B cell (primary cell): ENCODE measurements at regions of chr12 and their contacts with region 1.

Region 1: DNA sequence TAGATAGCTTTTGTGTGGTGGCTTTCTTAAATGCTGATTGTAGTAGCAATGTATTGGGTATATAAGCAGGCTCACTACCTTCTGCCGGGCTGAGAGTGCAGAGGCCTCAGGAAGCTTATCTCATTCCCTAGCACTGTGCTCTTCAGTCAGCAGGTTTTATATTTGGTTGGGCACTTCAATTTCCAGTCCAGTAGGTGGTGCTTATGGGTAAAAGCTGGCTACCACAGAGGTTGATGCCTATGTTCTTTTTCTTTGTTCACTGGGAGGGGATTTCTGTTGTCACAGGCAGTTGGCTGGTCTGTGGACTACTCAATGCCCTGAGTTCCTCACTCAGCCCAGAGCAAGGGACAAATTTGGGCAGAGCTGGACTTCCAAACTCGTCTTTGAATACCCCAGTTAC is 43.0 kb upstream of the GLIPR1 start:
- DNase-seq: peak; percentile 65
- ATAC-seq: peak; percentile 86
- H3K4me3 ChIP-seq: no peak overlapping the region
- H3K4me3 Mint-ChIP-seq: no peak overlapping the region
- H3K27ac ChIP-seq: no peak overlapping the region
- H3K27ac Mint-ChIP-seq: no peak overlapping the region
- H3K4me1 ChIP-seq: peaks cover 0 to 6% of the 10 kb centered on the region in 2 donors
- H3K4me1 Mint-ChIP-seq: peaks cover 9% of the 10 kb centered on the region
- H3K27me3 ChIP-seq: no peaks in the 10 kb centered on the region
- H3K27me3 Mint-ChIP-seq: peaks cover 7% of the 10 kb centered on the region
- CTCF ChIP-seq: peak; percentile 60

Region 2: GRCh38 chr12:75041472-75041871 is 396.1 kb before region 1 on chr12:
- CTCF ChIA-PET with region 1: no interaction called
- POLR2A ChIA-PET with region 1: no interaction called
- intact Hi-C with region 1: no loop called
- DNase-seq: no peak
- ATAC-seq: no peak
- H3K4me3 ChIP-seq: no peak overlapping the region
- H3K4me3 Mint-ChIP-seq: no peak overlapping the region
- H3K27ac ChIP-seq: no peak overlapping the region
- H3K27ac Mint-ChIP-seq: no peak overlapping the region
- H3K4me1 ChIP-seq: no peaks in the 10 kb centered on the region
- H3K4me1 Mint-ChIP-seq: no peaks in the 10 kb centered on the region
- H3K27me3 ChIP-seq: no peaks in the 10 kb centered on the region
- H3K27me3 Mint-ChIP-seq: no peaks in the 10 kb centered on the region
- CTCF ChIP-seq: no peak

Region 3: DNA sequence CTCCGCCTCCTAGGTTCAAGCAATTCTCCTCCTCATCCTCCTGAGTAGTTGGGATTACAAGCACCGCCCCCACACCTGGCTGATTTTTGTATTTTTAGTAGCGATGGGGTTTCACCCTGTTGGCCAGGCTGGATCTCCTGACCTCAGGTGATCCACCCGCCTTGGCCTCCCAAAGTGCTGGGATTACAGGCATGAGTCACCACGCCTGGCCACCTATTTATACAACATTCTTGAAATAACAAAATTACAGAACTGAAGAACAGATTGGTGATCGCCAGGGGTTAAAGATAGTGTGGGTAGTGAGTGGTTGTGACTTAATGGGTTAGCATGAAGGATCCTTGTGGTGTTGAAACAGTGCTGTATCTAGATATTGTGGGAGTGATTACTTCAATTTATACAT is 95.7 kb before region 1 on chr12:
- CTCF ChIA-PET with region 1: no interaction called
- POLR2A ChIA-PET with region 1: no interaction called
- intact Hi-C with region 1: no loop called
- DNase-seq: no peak
- ATAC-seq: no peak
- H3K4me3 ChIP-seq: no peak overlapping the region
- H3K4me3 Mint-ChIP-seq: no peak overlapping the region
- H3K27ac ChIP-seq: no peak overlapping the region
- H3K27ac Mint-ChIP-seq: no peak overlapping the region
- H3K4me1 ChIP-seq: no peaks in the 10 kb centered on the region
- H3K4me1 Mint-ChIP-seq: no peaks in the 10 kb centered on the region
- H3K27me3 ChIP-seq: no peaks in the 10 kb centered on the region
- H3K27me3 Mint-ChIP-seq: peaks cover 3% of the 10 kb centered on the region
- CTCF ChIP-seq: no peak

Region 4: GRCh38 chr12:75354011-75354410 is 83.6 kb before region 1 on chr12:
- CTCF ChIA-PET with region 1: no interaction called
- POLR2A ChIA-PET with region 1: no interaction called
- intact Hi-C with region 1: no loop called
- DNase-seq: no peak
- ATAC-seq: no peak
- H3K4me3 ChIP-seq: no peak overlapping the region
- H3K4me3 Mint-ChIP-seq: no peak overlapping the region
- H3K27ac ChIP-seq: no peak overlapping the region
- H3K27ac Mint-ChIP-seq: no peak overlapping the region
- H3K4me1 ChIP-seq: no peaks in the 10 kb centered on the region
- H3K4me1 Mint-ChIP-seq: no peaks in the 10 kb centered on the region
- H3K27me3 ChIP-seq: no peaks in the 10 kb centered on the region
- H3K27me3 Mint-ChIP-seq: peaks cover 9% of the 10 kb centered on the region
- CTCF ChIP-seq: no peak

Region 5: DNA sequence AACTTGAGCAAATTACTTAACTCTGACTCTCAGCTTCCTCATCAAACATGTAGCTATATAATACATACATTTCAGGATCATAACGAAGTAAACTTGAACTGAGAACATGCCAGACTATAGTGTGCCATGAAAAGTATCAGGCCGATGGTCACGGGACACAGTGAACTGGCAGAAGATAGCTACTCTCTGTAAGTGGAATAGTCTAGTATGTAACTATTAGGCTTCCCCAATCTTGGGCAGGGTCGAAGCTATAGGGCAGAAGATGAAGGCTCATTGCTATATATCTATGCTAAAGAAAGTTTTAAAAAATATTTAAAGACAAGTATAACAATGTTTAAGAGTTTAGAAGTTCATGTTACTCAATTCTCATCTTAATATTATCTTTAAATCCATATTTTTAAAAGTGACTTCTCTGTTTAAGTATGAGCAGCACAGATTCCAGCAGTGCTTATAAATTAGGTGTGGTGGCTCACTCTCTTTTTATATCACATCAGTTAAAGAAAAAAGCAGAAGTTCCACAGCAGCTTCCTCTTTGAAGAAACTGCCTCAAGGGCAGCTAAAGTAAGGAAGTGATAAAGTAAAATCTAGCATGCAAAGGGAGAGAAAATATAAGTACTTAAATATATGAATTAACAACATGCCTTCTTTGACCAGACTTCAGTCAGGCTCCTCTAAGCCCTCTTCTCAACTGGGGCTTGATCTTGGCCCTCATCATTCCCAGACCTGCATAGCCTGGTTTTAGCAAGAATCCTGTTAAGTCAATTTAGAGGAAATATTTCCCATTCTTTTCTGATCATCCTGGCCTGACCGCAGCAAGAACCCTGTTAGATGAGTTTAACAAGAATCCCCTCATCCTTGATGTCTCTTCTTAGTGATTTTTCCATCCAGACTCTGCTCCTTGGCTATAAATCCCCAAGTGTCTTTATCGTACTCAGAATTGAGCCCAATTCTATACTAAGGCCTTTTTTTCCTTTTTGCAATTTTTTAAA is 34.6 kb after region 1 on chr12:
- CTCF ChIA-PET with region 1: interaction called, 13 read pairs
- POLR2A ChIA-PET with region 1: interaction called, 3 read pairs
- intact Hi-C with region 1: no loop called
- DNase-seq: peak; percentile 78
- ATAC-seq: peak; percentile 87
- H3K4me3 ChIP-seq: peak overlapping the region in 3 of 5 experiments; percentile 5 to 49 (median 16)
- H3K4me3 Mint-ChIP-seq: peak overlapping the region; percentile 72
- H3K27ac ChIP-seq: peak overlapping the region; percentile 68 to 76
- H3K27ac Mint-ChIP-seq: peak overlapping the region; percentile 94
- H3K4me1 ChIP-seq: peaks cover 20 to 22% of the 10 kb centered on the region in 2 donors
- H3K4me1 Mint-ChIP-seq: peaks cover 41% of the 10 kb centered on the region
- H3K27me3 ChIP-seq: no peaks in the 10 kb centered on the region
- H3K27me3 Mint-ChIP-seq: no peaks in the 10 kb centered on the region
- CTCF ChIP-seq: no peak

Region 6: GRCh38 chr12:75489613-75490210 is 52.1 kb after region 1 on chr12:
- CTCF ChIA-PET with region 1: interaction called, 104 read pairs
- POLR2A ChIA-PET with region 1: no interaction called
- intact Hi-C with region 1: loop called (anchors 2 kb)
- DNase-seq: no peak
- ATAC-seq: peak; percentile 21
- H3K4me3 ChIP-seq: no peak overlapping the region
- H3K4me3 Mint-ChIP-seq: no peak overlapping the region
- H3K27ac ChIP-seq: peak overlapping the region in 1 of 2 donors; percentile 28
- H3K27ac Mint-ChIP-seq: peak overlapping the region; percentile 5
- H3K4me1 ChIP-seq: peaks cover 9 to 16% of the 10 kb centered on the region in 2 donors
- H3K4me1 Mint-ChIP-seq: peaks cover 50% of the 10 kb centered on the region
- H3K27me3 ChIP-seq: no peaks in the 10 kb centered on the region
- H3K27me3 Mint-ChIP-seq: no peaks in the 10 kb centered on the region
- CTCF ChIP-seq: no peak

Region 7: GRCh38 chr12:75505706-75506312 is 68.2 kb after region 1 on chr12:
- CTCF ChIA-PET with region 1: interaction called, 26 read pairs
- POLR2A ChIA-PET with region 1: interaction called, 3 read pairs
- intact Hi-C with region 1: loop called (anchors 1 kb)
- DNase-seq: peak; percentile 53
- ATAC-seq: peak; percentile 57
- H3K4me3 ChIP-seq: no peak overlapping the region
- H3K4me3 Mint-ChIP-seq: no peak overlapping the region
- H3K27ac ChIP-seq: peak overlapping the region; percentile 4 to 37
- H3K27ac Mint-ChIP-seq: no peak overlapping the region
- H3K4me1 ChIP-seq: peaks cover 5 to 12% of the 10 kb centered on the region in 2 donors
- H3K4me1 Mint-ChIP-seq: peaks cover 18% of the 10 kb centered on the region
- H3K27me3 ChIP-seq: no peaks in the 10 kb centered on the region
- H3K27me3 Mint-ChIP-seq: no peaks in the 10 kb centered on the region
- CTCF ChIP-seq: peak; percentile 82

Region 8: DNA sequence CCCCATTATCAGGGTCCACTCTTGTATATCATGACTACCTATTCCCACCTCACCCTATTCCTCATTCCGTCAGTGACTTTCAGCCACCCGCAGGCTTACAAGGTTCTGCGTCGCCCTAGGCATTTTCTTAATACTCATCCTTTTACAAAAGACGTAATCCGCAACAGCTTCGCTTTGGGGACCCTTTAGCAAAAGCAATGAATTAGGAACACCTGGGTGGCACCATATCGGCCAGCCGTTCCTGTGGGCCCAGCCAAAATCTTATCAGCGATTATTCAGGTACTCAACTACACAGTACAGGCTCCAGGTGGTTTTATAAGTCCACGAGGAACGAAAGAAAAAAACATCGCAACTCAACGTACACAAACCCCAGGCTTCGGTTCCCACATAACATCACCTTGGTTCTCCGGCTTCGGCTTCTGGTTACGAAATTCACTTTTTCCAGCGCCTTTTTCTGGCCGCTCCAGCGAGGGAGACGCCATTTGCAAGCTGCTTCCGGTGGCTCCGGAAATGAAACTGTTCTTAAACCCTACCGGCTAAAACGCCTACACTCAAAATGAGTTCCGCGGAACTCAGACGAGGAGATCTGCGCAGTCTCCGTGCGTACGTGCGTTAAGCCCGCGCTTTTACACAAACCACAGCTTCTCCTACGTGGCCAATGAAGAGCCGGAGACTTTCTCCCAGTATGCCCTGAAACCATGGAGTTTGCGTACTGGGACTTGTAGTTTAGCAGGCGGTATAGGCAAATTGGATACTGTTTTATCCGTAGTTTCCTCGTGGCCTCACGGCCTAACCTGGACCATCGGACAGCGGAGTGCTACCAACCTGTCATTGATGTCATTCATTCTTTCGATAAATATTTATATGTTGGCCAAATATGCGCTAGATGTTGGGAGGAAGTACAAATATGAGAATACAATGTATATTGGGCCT is 73.8 kb after region 1 on chr12 and contains the start of gene KRR1:
- CTCF ChIA-PET with region 1: interaction called, 26 read pairs
- POLR2A ChIA-PET with region 1: interaction called, 3 read pairs
- intact Hi-C with region 1: no loop called
- DNase-seq: peak; percentile 95
- ATAC-seq: peak; percentile 97
- H3K4me3 ChIP-seq: peak within 1 kb of the TSS; percentile 61 to 100 (median 93)
- H3K4me3 Mint-ChIP-seq: peak within 1 kb of the TSS; percentile 93
- H3K27ac ChIP-seq: peak within 1 kb of the TSS; percentile 72 to 83
- H3K27ac Mint-ChIP-seq: peak within 1 kb of the TSS; percentile 95
- H3K4me1 ChIP-seq: peaks cover 11 to 18% of the 10 kb centered on the region in 2 donors
- H3K4me1 Mint-ChIP-seq: peaks cover 28% of the 10 kb centered on the region
- H3K27me3 ChIP-seq: no peaks in the 10 kb centered on the region
- H3K27me3 Mint-ChIP-seq: no peaks in the 10 kb centered on the region
- CTCF ChIP-seq: no peak
- total RNA-seq, gene KRR1: 80.2 and 87.7 TPM in 2 replicates

Region 9: DNA sequence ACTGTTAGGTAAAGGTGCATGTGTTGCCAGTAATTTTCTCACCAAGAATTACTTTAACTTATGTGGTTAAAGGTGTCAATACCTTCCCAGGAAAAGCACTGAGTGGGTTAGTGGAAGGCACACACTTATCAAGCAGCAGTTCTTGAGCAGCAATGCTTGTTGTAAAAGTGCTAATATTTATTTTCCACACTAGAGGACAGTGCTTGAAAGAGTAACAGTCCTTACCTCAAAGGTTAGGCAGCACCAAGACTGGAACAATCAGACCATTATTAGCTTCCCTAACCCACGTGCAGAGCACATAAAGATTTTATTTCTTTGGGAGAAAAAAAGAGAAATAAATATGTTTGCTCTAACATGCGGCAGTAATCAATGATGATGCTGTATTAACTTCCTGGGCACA is 122.6 kb after region 1 on chr12:
- CTCF ChIA-PET with region 1: no interaction called
- POLR2A ChIA-PET with region 1: no interaction called
- intact Hi-C with region 1: no loop called
- DNase-seq: no peak
- ATAC-seq: no peak
- H3K4me3 ChIP-seq: no peak overlapping the region
- H3K4me3 Mint-ChIP-seq: no peak overlapping the region
- H3K27ac ChIP-seq: no peak overlapping the region
- H3K27ac Mint-ChIP-seq: no peak overlapping the region
- H3K4me1 ChIP-seq: no peaks in the 10 kb centered on the region
- H3K4me1 Mint-ChIP-seq: no peaks in the 10 kb centered on the region
- H3K27me3 ChIP-seq: peaks cover 0 to 12% (median 2%) of the 10 kb centered on the region in 4 experiments
- H3K27me3 Mint-ChIP-seq: peaks cover 33% of the 10 kb centered on the region
- CTCF ChIP-seq: no peak